RWPE1 (cell line): ENCODE measurements at regions of chr20 and their contacts with region 1.

Region 1: DNA sequence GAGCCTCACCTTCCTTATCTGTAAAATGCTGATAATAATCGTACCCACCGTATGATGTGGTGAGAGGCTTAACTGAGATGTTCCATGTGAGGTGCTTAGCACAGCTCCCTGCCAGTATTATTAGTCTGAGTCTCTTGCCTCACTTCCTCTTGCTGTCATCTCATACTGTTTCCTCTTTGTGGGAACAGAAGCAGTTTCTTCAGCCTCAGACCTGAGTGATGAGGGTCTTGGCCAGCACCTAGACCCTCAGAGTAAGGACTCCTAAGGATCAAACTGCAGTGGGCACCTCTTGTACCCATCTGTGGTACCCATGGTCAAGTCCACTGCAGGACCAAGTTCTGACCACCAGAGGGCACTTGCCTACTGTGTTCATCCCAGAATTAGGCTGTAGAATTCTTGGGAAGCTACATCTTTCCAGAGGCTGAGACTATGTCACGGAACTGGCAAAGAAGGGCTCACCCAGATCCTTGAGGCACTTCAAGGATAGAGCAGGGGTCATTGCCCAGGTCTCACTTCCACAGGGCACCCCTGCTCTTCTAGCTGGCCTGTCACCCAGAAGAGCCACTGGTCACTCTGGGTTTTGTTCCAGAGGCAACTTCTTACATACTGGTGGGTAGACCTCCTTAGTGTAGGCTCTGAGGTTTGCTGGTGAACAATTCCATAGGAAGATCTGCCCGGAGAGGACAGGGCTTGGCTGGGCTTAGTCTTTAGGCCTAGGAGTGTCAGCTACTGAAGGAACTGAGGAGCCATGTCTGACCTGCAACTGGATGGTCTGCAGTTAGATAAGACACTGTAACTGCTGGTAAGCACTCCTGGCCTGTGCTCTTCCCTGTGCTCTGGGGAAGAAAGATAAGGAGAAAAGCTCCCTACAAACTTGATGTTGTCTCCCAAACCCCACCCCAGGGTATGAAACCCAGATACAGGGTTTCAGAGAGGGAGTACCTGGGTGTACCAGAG is 20.6 kb upstream of the SGK2 start:
- DNase-seq: peak; percentile 81
- H3K27ac ChIP-seq: no peak overlapping the region
- CTCF ChIP-seq: peak; percentile 99

Region 2: DNA sequence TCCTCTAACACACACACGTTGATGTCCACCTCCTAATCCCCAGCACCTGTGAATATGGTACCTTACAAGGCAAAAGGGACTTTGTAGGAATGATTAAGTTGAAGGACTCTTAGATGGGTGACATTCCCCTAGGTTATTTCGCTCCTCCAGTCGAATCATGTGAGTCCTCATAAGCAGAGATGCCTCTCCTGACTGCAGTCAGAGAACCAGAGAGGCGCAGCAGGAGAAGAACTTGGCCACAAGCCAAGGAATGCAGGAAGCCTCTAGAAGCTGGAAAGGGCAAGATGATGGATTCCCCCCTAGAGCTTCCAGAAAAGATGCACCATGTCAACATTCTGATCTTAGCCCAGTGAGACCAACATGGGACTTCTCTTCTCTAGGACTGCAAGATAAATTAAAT is 215.3 kb before region 1 on chr20:
- CTCF ChIA-PET with region 1: no interaction called
- POLR2A ChIA-PET with region 1: no interaction called
- DNase-seq: peak; percentile 20
- H3K27ac ChIP-seq: no peak overlapping the region
- CTCF ChIP-seq: no peak

Region 3: DNA sequence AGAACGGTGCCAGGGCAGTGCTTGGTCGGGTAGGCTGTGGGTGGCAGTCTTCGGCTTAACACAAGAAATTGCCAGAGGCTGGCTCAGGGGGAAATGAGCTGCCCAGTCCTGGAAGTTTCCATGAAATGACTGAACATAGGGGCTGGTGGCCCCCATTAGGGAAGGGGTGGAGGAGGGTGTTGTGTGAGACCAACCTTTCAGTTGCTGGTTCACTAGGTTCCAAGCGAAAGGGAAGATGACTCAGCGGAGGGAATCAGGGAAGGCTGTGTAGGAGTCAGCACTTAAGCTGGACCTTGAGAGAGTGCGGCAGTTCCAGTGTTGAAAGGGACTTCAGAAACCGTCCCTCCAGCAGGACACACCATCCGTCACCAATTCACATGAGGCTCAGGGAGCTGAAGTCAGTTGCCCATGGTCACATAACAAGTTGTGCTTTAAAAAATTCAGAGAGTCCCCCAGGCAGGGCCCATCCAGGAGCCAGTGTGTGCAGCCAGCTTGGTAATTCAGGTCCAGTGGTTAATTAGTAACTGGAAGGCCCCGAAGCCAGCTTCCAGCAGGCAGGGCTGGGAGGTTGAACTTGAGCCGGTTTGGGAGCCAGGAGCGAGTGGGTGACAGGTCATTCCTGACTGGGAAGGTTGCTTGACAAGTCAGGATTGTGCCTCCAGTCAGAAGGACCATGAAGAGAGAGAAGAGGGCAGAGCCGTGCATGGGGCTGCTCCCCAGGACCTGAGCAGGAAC is 20.4 kb after region 1 on chr20 and contains the start of gene SGK2:
- CTCF ChIA-PET with region 1: interaction called, 10 read pairs
- POLR2A ChIA-PET with region 1: no interaction called
- DNase-seq: no peak
- H3K27ac ChIP-seq: no peak within 1 kb of the TSS
- CTCF ChIP-seq: no peak

Region 4: DNA sequence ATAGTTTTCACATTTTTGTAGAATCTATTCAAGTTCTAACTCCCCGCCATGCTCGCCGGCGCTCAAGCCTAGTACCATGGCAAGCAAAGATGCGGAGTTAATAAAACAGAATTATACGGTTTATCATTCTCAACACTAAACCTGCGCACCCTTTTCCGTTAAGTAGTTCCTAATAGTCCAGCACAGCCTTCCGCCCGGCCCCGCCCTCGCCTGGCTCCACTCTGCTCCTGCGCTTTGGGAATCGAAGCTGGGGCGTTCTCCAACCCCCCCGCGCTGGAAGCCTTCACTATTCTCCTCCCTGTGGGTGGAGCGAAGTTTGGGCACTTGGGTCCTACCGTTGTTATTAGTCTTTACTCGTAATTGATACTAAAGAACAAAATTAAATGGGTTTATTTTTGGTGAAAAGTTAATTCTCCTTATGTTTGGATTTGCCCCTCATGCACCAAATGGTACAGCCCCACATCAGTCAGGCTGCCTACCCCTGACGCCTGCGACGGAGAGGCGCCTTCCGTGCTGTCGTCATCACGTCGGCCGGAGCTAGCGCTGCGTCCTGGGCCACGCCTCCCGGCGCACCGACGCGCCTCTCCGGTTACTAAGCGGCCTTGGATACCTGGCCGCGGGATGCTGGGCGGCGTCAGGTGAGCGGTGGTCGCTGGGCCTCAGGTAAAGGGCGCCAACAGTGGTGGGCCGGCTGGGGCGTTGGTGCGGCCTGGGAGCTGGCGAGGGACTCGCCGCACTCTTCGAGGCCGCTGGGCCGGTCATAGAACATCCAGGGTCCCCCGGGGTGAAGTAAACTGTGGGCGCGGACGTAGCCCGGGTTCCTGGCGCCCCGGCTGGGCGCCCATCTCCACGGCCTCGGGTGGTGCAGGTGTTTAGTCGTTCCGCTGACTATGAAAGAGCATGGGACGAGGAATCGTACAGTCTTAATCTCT is 52.5 kb after region 1 on chr20 and contains the start of gene IFT52:
- CTCF ChIA-PET with region 1: interaction called, 16 read pairs
- POLR2A ChIA-PET with region 1: no interaction called
- DNase-seq: peak; percentile 98
- H3K27ac ChIP-seq: peak within 1 kb of the TSS; percentile 84
- CTCF ChIP-seq: no peak

Region 5: DNA sequence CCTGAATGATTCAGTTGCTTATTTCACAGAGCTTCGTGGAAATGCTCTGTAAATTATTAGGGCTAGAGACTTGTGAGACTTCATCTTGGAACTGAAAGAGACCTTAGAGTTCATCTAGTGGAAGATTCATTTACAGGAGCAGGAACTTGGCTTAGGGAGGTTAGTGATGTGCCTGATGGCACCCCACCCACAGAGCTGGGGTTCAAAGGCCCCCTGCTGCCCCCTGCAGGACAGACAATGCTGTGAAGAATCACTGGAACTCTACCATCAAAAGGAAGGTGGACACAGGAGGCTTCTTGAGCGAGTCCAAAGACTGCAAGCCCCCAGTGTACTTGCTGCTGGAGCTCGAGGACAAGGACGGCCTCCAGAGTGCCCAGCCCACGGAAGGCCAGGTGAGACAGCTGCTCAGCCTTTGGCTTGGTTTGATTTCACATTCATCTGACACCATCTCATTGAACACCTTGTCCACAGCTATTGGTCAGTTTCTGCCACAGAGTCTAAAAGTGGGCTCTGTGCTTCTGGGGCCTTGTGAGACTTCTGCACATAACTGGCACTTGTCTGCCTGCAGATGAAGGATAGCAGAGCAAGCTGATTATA is 153.8 kb after region 1 on chr20:
- CTCF ChIA-PET with region 1: interaction called, 12 read pairs
- POLR2A ChIA-PET with region 1: no interaction called
- DNase-seq: peak; percentile 68
- H3K27ac ChIP-seq: no peak overlapping the region
- CTCF ChIP-seq: peak; percentile 69